HCT116 (cell line): ENCODE measurements at regions of chr17 and their contacts with region 1.

Region 1: DNA sequence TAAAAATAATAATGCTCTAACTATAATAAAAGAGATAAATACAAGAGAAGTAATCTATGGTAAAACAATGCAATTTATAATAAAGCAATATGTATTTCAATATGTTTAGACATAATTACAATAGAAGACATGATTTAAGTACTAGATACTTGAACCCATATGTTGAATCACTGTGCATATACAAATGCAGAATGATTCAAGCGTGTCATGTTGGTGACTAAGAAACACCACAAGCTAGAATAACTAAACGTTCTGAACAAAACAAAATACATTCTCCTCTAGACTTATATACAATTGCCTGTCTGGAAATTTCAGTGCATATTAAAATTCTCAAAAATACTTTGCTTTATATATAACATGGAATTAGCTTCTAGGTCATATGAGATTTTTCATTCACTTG is 11.2 kb downstream of the TADA2A start:
- DNase-seq: no peak
- ATAC-seq: no peak
- H3K4me3 ChIP-seq: no peak overlapping the region
- H3K27ac ChIP-seq: no peak overlapping the region
- H3K4me1 ChIP-seq: no peaks in the 10 kb centered on the region
- H3K27me3 ChIP-seq: no peaks in the 10 kb centered on the region
- CTCF ChIP-seq: no peak
- POLR2A ChIP-seq: no peak
- RAD21 ChIP-seq: no peak

Region 2: GRCh38 chr17:37283414-37283961 is 134.4 kb before region 1 on chr17:
- CTCF ChIA-PET with region 1: no interaction called
- POLR2A ChIA-PET with region 1: no interaction called
- RAD21 ChIA-PET with region 1: no interaction called
- intact Hi-C with region 1: no loop called
- DNase-seq: no peak
- ATAC-seq: no peak
- H3K4me3 ChIP-seq: no peak overlapping the region
- H3K27ac ChIP-seq: no peak overlapping the region
- H3K4me1 ChIP-seq: peaks cover 0 to under 1% of the 10 kb centered on the region in 2 experiments; a peak in 2 of 4 replicates
- H3K27me3 ChIP-seq: no peaks in the 10 kb centered on the region
- CTCF ChIP-seq: no peak
- POLR2A ChIP-seq: no peak
- RAD21 ChIP-seq: no peak

Region 3: DNA sequence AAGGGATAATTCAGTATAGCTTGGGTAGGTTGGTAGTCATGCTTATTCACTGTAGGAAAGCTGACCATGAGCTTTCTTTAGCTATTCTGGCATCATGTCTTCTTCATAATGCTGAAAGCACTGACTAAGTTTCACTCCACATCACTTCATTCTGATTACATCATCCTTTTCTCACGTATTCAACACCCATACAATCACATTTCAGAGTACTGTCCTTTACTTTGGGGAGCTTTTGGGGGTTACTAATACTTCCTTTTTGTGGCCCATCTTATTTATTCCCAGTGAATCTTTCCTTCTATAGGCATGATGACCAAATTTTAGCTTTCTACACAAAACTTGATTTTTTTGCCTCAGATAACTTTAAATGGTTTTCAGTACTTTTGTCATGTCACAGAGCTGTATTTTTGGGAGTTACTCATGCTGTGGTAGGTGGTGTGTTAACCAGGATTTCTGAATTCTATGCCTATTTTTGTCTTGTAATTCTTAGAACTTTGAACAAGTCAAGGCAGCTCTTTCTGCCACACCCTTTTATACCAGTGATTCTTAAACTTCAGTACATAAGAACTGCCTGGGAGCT is 12.3 kb after region 1 on chr17:
- CTCF ChIA-PET with region 1: no interaction called
- POLR2A ChIA-PET with region 1: interaction called, 4 read pairs
- RAD21 ChIA-PET with region 1: no interaction called
- intact Hi-C with region 1: loop called (anchors 2 kb)
- DNase-seq: no peak
- ATAC-seq: no peak
- H3K4me3 ChIP-seq: no peak overlapping the region
- H3K27ac ChIP-seq: no peak overlapping the region
- H3K4me1 ChIP-seq: no peaks in the 10 kb centered on the region
- H3K27me3 ChIP-seq: no peaks in the 10 kb centered on the region
- CTCF ChIP-seq: no peak
- POLR2A ChIP-seq: no peak
- RAD21 ChIP-seq: no peak